ENCODE measurements at regions of chr16 and their contacts with region 1.

Region 1: DNA sequence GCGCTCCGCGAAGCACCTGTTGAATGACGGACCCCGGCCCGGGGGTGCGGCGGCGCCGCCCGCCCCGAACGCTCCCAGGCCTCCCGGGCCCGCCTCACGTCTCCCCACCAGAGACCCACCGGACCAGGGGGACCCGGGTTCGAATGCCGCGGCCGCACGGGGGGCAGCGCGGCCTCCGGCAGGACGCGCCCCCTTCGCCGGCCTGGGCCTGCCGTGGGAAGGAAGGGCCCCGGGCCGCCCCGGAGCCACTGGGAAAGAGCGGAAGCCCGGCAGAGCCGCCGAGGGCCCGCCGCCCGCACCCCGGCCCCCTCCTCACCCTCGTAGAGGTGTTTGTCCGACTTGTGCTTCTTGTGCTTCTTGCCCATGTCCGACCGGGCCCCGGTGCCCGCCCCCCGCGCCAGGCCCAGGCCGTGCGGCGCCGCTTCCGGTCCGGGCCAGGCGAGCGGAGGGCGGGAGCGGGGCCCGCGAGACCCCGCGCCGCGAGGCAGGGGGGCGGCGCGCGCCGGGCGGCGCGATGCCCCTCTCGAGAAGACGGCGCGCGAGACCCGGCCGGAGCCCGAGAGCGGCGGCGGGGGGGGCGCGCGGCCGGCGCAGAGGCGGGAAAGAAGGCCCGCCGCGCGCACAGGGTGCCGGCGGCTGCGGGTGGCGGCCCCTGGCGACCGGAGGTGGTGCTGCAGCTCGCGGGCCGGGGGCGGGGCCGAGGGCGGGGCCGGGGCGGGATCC is at the start of gene BRD7:
- DNase-seq: peak in 1 of 2 donors; percentile 75
- H3K4me3 ChIP-seq: peak within 1 kb of the TSS; percentile 90
- H3K27ac ChIP-seq: peak within 1 kb of the TSS; percentile 73 to 77
- H3K4me1 ChIP-seq: peaks cover 5 to 42% of the 10 kb centered on the region in 2 donors
- H3K27me3 ChIP-seq: no peaks in the 10 kb centered on the region
- CTCF ChIP-seq: peak in 1 of 3 experiments; percentile 58
- total RNA-seq, gene BRD7: 17.7 TPM

Region 2: DNA sequence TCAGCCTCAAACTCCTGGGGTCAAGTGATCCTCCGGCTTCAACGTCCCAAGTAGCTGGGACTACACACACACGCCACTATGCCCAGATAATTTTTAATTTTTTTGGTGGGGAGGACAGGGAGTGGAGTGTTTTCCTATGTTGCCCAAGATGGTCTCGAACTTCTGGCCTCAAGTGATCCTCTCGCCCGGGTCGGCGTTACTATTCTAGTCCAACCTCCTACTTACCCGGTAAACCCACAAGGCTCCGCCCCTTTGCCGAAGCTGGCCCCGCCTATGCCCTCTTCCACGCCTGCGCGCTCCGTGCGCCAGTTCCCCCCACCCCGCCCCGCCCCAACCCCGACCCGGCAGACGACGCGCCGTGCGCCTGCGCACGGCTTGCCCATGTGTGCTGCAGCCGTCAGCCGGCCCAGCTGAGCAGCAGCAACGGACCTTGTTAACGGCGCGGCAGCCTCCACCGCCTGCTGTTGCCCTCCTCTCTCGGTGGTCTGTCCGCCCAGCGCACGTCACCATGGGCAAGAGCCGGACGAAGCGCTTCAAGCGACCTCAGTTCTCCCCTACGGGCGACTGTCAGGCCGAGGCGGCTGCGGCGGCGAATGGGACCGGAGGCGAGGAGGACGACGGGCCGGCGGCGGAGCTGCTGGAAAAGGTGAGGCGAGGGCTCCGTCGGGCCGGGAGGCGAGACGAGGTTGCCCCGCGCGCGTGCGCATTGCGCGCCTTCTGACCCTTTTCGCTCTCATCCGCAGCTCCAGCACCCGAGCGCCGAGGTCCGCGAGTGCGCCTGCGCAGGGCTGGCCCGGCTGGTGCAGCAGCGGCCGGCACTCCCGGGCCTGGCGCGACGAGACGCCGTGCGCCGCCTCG is 302.7 kb before region 1 on chr16 and contains the start of gene HEATR3:
- intact Hi-C with region 1: loop called (anchors 10 kb)
- DNase-seq: peak; percentile 65 to 95
- H3K4me3 ChIP-seq: peak within 1 kb of the TSS; percentile 80 to 98
- H3K27ac ChIP-seq: peak within 1 kb of the TSS; percentile 90 to 92
- H3K4me1 ChIP-seq: peaks cover 4 to 20% of the 10 kb centered on the region in 2 donors
- H3K27me3 ChIP-seq: no peaks in the 10 kb centered on the region
- CTCF ChIP-seq: no peak
- total RNA-seq, gene HEATR3: 10.4 TPM

Region 3: DNA sequence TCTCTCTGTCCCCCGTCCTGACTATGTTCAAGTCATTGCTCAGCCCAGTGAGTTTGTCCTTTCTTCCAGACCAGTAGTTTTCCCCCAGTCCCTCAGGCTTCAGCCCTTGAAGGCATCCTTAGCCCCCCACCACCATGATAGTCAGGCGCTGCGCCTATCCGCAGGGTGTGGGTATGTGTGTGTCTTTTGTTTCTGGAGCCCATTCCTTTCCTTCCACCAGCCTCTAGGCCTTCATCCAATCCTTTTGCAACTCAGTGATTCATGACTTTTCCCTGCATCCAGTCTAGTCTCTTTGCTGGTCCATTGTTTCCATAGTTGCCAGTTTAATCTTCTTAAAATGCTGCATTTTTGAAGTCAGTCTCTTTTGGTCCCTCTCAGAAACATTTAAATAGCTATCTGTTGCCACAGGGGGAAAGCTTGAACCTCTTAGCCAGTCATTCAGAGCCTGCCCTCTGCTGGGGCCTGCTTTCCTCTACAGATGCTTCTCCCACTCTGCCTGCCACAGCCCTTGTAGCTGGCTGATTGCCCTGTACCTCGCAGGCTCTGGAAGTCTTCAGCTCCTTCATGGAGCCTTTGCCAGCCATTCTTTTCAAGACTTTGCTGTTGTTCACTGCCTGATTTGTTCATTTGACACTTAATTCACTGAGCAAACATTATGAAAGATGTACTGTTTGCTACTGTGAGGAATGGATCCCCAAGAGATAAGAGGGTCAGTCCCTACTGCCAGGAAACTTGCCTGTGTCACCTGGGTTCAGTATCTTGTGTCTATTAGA is 158.1 kb before region 1 on chr16:
- intact Hi-C with region 1: loop called (anchors 2 kb)
- DNase-seq: peak in 1 of 2 donors; percentile 89
- H3K4me3 ChIP-seq: no peak overlapping the region
- H3K27ac ChIP-seq: peak overlapping the region; percentile 17 to 43
- H3K4me1 ChIP-seq: peaks cover 13 to 44% of the 10 kb centered on the region in 2 donors
- H3K27me3 ChIP-seq: no peaks in the 10 kb centered on the region
- CTCF ChIP-seq: peak; percentile 60 to 78 (median 63)

Region 4: GRCh38 chr16:50326949-50327402 is 41.6 kb before region 1 on chr16:
- intact Hi-C with region 1: loop called (anchors 5 kb)
- DNase-seq: peak in 1 of 2 donors; percentile 66
- H3K4me3 ChIP-seq: no peak overlapping the region
- H3K27ac ChIP-seq: no peak overlapping the region
- H3K4me1 ChIP-seq: peaks cover 0 to 7% of the 10 kb centered on the region in 2 donors
- H3K27me3 ChIP-seq: no peaks in the 10 kb centered on the region
- CTCF ChIP-seq: peak; percentile 42 to 65 (median 46)

Region 5: GRCh38 chr16:50548125-50548908 is 179.7 kb after region 1 on chr16 and contains the start of gene NKD1:
- intact Hi-C with region 1: loop called (anchors 2 kb)
- DNase-seq: peak in 1 of 2 donors; percentile 86
- H3K4me3 ChIP-seq: peak within 1 kb of the TSS; percentile 67 to 82
- H3K27ac ChIP-seq: peak within 1 kb of the TSS; percentile 71 to 82
- H3K4me1 ChIP-seq: peaks cover 2 to 13% of the 10 kb centered on the region in 2 donors
- H3K27me3 ChIP-seq: no peaks in the 10 kb centered on the region
- CTCF ChIP-seq: no peak
- total RNA-seq, gene NKD1: 33.2 TPM

Region 6: DNA sequence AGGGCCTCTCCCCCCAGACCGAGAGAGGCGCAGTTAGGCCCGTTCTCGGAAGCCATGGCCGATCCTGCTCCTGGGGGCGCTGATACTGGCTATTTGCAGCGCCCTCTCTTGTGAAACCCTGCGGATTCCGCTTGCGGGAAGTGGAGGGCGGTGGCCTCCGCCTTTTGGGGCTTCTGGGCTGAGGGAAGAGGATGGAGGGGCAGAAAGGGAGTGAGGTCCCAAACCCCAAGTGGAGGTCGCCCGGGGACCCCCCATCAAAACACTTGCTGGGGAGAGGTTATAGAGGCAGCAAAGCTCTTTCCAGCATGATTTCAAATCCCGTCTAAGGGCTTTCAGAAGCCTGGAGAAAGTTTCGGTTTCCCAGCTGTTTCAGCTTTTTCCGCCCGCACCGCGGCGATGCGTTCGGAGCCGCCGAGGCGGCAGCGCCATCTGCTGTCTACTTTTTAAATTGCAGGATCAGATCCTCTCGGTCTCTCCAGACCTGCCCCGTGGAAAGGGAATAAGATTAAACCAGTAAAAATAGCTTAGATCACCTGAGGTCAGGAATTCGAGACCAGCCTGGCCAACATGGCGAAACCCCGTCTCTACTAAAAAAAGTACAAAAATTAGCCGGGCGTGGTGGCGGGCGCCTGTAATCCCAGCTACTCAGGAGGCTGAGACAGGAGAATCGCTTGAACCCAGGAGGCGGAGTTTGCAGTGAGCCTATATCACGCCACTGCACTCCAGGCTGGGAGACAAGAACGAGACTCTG is 296.7 kb after region 1 on chr16:
- intact Hi-C with region 1: loop called (anchors 1 kb)
- DNase-seq: peak in 1 of 2 donors; percentile 88
- H3K4me3 ChIP-seq: peak overlapping the region; percentile 41 to 61
- H3K27ac ChIP-seq: peak overlapping the region; percentile 58 to 65
- H3K4me1 ChIP-seq: peaks cover 0 to 5% of the 10 kb centered on the region in 2 donors
- H3K27me3 ChIP-seq: no peaks in the 10 kb centered on the region
- CTCF ChIP-seq: peak; percentile 82 to 93 (median 83)

Region 7: DNA sequence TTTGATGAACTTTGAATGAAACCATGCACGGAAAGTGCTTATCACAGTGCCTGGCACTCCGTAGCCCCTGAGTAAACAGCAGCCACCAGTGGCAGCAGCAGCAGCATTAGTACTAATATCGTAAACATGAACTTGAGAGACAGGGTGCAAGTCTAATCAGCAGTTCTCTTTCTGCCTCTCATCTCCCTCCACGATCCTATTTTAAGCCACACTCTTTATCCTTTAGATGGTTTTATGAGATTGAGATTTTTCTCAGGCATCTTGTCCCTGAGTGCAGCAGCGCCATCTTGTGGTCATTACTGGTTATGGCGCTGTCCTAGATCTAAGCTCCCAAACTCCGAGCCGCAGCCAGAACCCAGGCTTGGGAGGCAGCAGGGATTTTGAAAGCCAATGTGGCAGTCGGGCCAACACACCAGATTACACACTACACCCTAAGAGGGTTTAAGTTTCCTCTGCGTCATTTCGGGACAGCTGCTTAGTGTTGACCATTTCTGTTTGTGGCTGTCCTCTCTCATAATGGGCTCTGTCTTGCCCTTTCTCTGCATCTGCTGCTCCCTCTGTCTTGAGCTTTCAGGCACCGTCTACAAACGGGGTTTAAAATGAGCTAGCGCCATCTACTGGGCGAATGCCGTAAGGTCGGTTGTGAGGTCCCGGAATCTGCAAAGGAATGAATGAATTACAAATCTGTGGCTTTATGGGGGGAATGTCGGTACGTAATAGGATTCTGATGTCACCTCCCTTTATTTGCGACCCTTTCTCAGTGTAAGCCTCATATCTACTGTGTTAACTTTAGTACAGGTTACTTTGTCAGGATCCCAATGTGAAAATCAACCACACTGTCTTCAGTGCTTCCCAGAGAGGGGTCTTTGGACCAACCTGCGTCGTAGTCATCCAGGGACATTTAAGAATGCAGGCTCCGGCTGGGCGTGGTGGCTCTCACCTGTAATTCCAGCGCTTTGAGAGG is 437.8 kb after region 1 on chr16:
- intact Hi-C with region 1: loop called (anchors 10 kb)
- DNase-seq: peak; percentile 49 to 94
- H3K4me3 ChIP-seq: peak overlapping the region; percentile 34 to 52
- H3K27ac ChIP-seq: peak overlapping the region; percentile 5 to 61
- H3K4me1 ChIP-seq: peaks cover 0 to 4% of the 10 kb centered on the region in 2 donors
- H3K27me3 ChIP-seq: no peaks in the 10 kb centered on the region
- CTCF ChIP-seq: peak; percentile 80 to 94 (median 86)